PC-9 (cell line): ENCODE measurements at regions of chr11 and their contacts with region 1.

Region 1: DNA sequence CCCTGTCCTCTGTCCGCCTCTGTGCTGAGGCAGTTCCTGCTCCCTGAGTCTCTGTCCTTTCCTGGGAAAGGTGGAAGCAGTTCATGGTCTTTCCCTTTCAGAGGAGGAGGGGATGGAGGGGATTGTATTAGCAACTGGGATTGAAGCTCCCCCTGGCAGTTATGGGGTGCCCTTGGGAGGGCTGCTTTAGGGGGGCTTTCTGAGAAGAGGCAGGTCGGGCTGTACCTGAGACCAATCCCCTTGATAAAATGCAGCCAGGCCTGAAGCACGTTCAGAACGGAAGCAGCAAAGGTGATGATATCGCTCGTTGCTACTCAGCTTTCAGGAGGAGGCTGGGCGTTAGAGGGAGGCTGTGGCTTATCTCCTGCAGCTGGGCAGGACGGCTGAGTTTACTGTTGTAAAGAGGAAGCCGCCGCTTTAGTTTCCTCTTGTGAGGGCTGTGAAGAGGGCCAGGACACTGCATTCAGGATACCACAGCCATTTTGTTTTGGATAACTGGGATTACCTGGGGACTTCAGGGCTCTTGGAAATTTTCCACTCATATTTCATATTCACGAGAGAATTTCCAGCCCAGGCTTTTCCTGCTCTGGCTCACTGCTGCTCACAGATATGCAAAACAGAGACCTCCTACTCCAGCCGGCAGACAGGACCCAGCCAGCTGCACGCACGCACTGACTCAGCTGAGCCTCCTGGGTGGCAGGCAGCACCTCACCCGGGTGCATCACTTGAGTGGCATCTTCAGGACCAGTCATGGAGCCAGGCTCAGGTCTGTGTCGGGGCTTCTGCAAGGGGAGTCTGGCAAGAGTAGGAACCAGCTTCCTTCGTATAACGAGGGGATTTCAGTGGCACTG is 798 bp downstream of the AMPD3 start:
- DNase-seq: peak; percentile 43 to 62
- H3K4me3 ChIP-seq: peak overlapping the region; percentile 57
- H3K27ac ChIP-seq: peak overlapping the region; percentile 79
- H3K4me1 ChIP-seq: peaks cover 54% of the 10 kb centered on the region
- H3K27me3 ChIP-seq: no peaks in the 10 kb centered on the region
- CTCF ChIP-seq: no peak

Region 2: GRCh38 chr11:10398525-10398924 is 57.3 kb before region 1 on chr11:
- CTCF ChIA-PET with region 1: no interaction called
- POLR2A ChIA-PET with region 1: no interaction called
- intact Hi-C with region 1: no loop called
- DNase-seq: peak in 1 of 2 experiments; percentile 34
- H3K4me3 ChIP-seq: no peak overlapping the region
- H3K27ac ChIP-seq: no peak overlapping the region
- H3K4me1 ChIP-seq: no peaks in the 10 kb centered on the region
- H3K27me3 ChIP-seq: no peaks in the 10 kb centered on the region
- CTCF ChIP-seq: no peak

Region 3: GRCh38 chr11:10426475-10426874 is 29.4 kb before region 1 on chr11:
- CTCF ChIA-PET with region 1: no interaction called
- POLR2A ChIA-PET with region 1: interaction called, 21 read pairs
- intact Hi-C with region 1: no loop called
- DNase-seq: no peak
- H3K4me3 ChIP-seq: no peak overlapping the region
- H3K27ac ChIP-seq: no peak overlapping the region
- H3K4me1 ChIP-seq: no peaks in the 10 kb centered on the region
- H3K27me3 ChIP-seq: no peaks in the 10 kb centered on the region
- CTCF ChIP-seq: no peak

Region 4: DNA sequence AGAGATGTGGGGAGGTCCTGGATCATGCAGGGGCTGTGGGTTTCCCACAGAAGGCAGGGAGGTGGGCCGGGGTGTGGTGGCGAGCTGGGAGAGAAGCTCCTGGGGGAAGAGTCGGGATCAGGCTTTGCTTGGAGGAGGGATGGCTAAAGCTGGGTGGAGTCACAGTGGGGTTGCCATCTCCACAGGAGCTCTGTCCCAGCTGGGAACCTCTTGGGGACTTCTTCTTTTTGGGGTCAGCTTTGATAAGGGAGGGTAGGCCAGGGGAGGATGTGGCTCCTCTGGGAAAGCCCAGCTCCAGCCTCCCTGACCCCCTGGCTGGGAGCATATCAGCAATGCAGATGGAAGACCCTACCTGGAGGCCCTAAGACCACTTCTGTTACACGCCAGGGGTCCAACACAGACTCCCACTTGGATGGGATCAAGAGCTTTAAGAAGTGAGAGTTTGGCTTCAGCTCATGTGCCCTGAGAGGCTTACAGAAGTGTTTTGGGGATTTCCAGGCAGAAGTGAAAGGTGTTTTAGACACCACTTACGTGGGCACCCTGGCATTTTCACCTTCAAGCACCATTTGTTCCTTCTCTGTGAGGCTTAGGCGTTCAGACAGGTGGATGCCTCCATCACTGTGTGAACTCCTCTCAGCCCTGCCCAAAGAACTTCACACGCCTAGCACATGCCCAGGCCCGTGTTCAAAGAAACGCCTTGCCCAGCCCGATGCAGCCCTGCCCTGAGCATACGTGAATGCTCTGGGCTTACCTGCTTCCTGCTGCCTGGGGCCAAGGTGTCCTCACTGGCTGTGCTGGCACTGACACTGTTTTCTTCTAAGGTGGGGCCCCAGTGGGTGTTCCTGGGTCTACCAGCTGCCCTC is 33.0 kb after region 1 on chr11:
- CTCF ChIA-PET with region 1: interaction called, 4 read pairs
- POLR2A ChIA-PET with region 1: interaction called, 4 read pairs
- intact Hi-C with region 1: loop called (anchors 1 kb)
- DNase-seq: peak; percentile 40 to 68
- H3K4me3 ChIP-seq: no peak overlapping the region
- H3K27ac ChIP-seq: peak overlapping the region; percentile 74
- H3K4me1 ChIP-seq: peaks cover 54% of the 10 kb centered on the region
- H3K27me3 ChIP-seq: no peaks in the 10 kb centered on the region
- CTCF ChIP-seq: no peak